HCT116 (cell line): ENCODE measurements at regions of chr3 and their contacts with region 1.

Region 1: DNA sequence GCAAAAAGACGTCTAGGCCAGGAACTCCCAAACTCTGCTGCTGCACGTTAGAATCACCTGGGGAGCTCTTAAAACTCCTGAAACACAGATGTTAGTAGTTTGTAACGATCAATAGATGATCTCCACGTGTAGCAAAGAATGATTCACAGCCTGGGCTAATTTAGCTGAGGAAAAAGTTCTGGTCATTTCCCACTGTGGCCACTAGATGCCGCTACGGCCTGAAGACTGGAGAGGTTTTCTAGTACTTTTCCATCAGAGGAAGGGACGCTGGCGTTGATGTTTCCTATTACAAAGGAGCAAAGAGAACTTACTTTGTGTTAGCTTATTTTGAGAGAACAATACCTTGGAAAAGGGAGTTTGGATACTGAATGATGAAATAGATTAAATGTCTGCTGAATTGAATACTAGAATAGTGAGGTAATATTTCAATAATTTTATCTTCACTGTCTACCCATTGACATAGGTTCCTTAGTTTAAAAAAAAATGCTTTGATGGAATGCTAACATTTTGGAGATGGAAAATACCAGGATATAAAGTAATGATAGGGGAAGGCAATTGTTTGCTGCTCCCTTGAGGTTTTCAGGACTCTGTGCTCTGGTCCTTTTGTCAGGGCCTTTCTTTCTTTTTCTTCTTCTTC is 159.1 kb downstream of the P3H2 start:
- DNase-seq: peak; percentile 75
- ATAC-seq: peak; percentile 66
- H3K4me3 ChIP-seq: no peak overlapping the region
- H3K27ac ChIP-seq: no peak overlapping the region
- H3K4me1 ChIP-seq: peaks cover 3 to 7% of the 10 kb centered on the region in 2 experiments; a peak in 2 of 4 replicates
- H3K27me3 ChIP-seq: no peaks in the 10 kb centered on the region
- CTCF ChIP-seq: peak; percentile 80 to 89 (median 86); a peak in 5 of 6 replicates
- POLR2A ChIP-seq: no peak
- RAD21 ChIP-seq: peak; percentile 91

Region 2: GRCh38 chr3:189947948-189948723 is 13.5 kb before region 1 on chr3:
- CTCF ChIA-PET with region 1: interaction called, 12 read pairs
- POLR2A ChIA-PET with region 1: no interaction called
- RAD21 ChIA-PET with region 1: no interaction called
- intact Hi-C with region 1: no loop called
- DNase-seq: no peak
- ATAC-seq: peak; percentile 58
- H3K4me3 ChIP-seq: no peak overlapping the region
- H3K27ac ChIP-seq: no peak overlapping the region
- H3K4me1 ChIP-seq: peaks cover 2 to 13% of the 10 kb centered on the region in 2 experiments; a peak in 2 of 4 replicates
- H3K27me3 ChIP-seq: no peaks in the 10 kb centered on the region
- CTCF ChIP-seq: peak; percentile 54 to 87 (median 79)
- POLR2A ChIP-seq: no peak
- RAD21 ChIP-seq: peak; percentile 96

Region 3: DNA sequence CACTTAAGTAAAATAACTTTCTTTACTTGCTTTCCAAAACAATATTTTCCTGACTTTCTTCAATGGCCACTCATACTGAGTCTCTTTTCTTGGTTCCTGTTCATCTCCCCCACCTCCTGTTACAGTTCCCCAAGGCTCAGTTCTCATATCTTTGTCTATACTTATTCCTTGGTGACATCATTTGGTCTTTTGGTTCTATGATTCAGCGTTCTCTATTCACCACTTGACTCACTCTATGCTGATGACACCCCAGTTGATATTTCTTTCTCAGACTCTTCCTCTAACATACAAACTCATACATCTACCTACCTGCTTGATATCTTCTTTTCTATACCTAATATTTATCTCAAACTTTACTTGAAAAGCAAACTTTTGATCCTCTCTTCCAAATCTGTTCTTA is 244.1 kb after region 1 on chr3:
- CTCF ChIA-PET with region 1: interaction called, 11 read pairs
- POLR2A ChIA-PET with region 1: no interaction called
- RAD21 ChIA-PET with region 1: no interaction called
- intact Hi-C with region 1: no loop called
- DNase-seq: no peak
- ATAC-seq: no peak
- H3K4me3 ChIP-seq: no peak overlapping the region
- H3K27ac ChIP-seq: no peak overlapping the region
- H3K4me1 ChIP-seq: peaks cover 0 to 4% of the 10 kb centered on the region in 2 experiments; a peak in 2 of 4 replicates
- H3K27me3 ChIP-seq: no peaks in the 10 kb centered on the region
- CTCF ChIP-seq: no peak
- POLR2A ChIP-seq: no peak
- RAD21 ChIP-seq: no peak

Region 4: DNA sequence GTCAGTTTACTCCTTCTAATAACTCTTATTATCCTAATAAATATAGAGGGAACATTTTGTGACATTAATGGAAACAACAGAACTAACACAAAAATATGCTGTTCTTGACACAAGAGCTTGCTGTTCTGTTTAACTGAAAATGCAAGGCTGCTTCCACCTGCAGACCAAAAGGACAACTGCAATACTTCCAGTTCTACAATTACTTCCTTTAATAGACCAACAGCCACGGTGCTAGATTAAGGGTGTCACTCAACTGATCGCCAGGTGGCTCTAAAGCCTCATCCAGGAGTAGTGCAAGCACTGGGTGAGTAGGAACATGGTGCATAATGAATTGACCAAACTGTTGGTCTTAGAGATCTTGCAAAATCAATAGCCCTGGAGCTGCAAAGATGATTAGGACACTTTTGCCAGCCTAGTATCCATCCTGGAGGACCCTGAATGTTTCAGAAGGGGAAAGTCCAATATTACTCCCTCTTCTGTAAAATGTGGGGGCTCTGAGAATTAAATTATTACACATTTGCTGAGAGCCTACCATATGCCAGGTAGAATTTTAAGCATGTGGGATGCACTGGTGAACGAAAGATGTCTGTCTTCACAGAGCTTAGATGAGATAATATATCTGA is 422.7 kb after region 1 on chr3:
- CTCF ChIA-PET with region 1: interaction called, 28 read pairs
- POLR2A ChIA-PET with region 1: no interaction called
- RAD21 ChIA-PET with region 1: interaction called, 3 to 5 read pairs
- intact Hi-C with region 1: loop called (anchors 1 kb)
- DNase-seq: peak; percentile 87
- ATAC-seq: peak; percentile 98
- H3K4me3 ChIP-seq: no peak overlapping the region
- H3K27ac ChIP-seq: no peak overlapping the region
- H3K4me1 ChIP-seq: peaks cover 5 to 18% of the 10 kb centered on the region in 2 experiments; a peak in 2 of 4 replicates
- H3K27me3 ChIP-seq: no peaks in the 10 kb centered on the region
- CTCF ChIP-seq: peak; percentile 71 to 98 (median 78)
- POLR2A ChIP-seq: no peak
- RAD21 ChIP-seq: peak; percentile 98

Region 5: DNA sequence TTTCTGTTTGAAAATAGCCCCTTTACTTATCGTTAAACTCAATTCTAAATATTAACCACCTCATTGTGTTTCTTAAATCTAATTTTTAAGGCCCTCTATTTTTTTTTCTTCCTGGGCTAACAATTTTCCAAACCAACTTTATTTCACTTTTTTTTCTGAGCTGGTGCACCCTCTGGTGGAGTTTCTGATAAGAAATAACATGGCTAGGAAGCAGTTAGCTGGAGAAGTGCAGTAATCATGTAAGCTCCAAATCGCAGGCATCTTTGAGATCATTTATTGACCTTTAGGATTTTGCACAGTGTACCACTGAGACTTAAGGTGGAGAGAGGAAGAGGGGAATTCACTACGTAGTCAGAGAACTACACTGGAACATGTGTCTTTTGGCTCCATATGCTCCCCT is 481.6 kb after region 1 on chr3:
- CTCF ChIA-PET with region 1: interaction called, 15 read pairs
- POLR2A ChIA-PET with region 1: no interaction called
- RAD21 ChIA-PET with region 1: interaction called in 1 of 2 experiments, 3 read pairs
- intact Hi-C with region 1: no loop called
- DNase-seq: no peak
- ATAC-seq: peak; percentile 55; the same call in 1 of the 2 replicates
- H3K4me3 ChIP-seq: no peak overlapping the region
- H3K27ac ChIP-seq: no peak overlapping the region
- H3K4me1 ChIP-seq: no peaks in the 10 kb centered on the region
- H3K27me3 ChIP-seq: no peaks in the 10 kb centered on the region
- CTCF ChIP-seq: peak; percentile 42 to 58 (median 53); a peak in 4 of 6 replicates
- POLR2A ChIP-seq: no peak
- RAD21 ChIP-seq: peak; percentile 63

Region 6: GRCh38 chr3:191051037-191051436 is 1089.4 kb after region 1 on chr3:
- CTCF ChIA-PET with region 1: interaction called, 3 read pairs
- POLR2A ChIA-PET with region 1: no interaction called
- RAD21 ChIA-PET with region 1: no interaction called
- intact Hi-C with region 1: loop called (anchors 2 kb)
- DNase-seq: peak; percentile 31
- ATAC-seq: peak; percentile 63
- H3K4me3 ChIP-seq: no peak overlapping the region
- H3K27ac ChIP-seq: no peak overlapping the region
- H3K4me1 ChIP-seq: no peaks in the 10 kb centered on the region
- H3K27me3 ChIP-seq: no peaks in the 10 kb centered on the region
- CTCF ChIP-seq: peak; percentile 7 to 73 (median 55); a peak in 3 of 6 replicates
- POLR2A ChIP-seq: no peak
- RAD21 ChIP-seq: peak; percentile 82